K562 (cell line): ENCODE measurements at regions of chr14 and their contacts with region 1.

Region 1: DNA sequence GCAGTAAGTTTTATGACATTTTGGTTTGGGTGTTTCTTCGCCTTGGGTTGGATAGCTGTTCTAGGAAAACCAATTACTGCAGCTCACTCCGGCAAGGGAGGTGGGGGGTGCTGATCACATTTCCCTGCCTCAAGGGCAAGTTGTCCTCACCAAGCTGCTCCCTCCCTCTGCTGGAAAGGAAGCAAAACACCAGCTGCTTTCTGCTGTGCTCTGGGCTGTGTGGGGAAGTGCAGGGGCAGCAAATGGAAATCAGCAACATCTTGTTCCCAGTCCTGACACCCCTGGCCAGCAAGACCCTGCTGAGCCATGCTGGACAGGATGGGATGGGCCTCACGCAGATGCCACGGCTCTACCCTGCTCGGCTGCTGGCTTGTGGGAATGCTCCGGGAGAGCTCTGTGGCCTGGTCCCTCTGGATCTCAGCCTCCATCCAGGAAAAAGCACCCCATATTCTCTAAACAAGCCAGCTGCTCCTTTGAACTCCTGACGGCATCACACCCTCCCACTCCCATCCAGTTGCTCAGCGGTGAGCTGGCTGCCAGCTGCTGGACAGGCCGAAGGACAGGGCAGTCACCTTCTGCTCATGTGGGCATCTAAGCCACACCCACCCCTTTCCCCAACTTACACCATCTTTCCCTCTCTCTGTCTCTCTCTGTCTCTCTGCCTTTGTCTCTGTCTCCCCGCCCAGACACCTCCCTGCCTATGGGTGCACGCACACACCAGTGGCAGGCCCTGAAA is 52.4 kb upstream of the EIF5 start:
- DNase-seq: peak in 2 of 4 experiments; percentile 34 to 41
- ATAC-seq: peak; percentile 84
- H3K4me3 ChIP-seq: no peak overlapping the region
- H3K27ac ChIP-seq: no peak overlapping the region
- H3K4me1 ChIP-seq: peaks cover 0 to 13% of the 10 kb centered on the region in 2 experiments; a peak in 2 of 5 replicates
- H3K27me3 ChIP-seq: peaks cover 0 to 9% of the 10 kb centered on the region in 2 experiments; a peak in 1 of 5 replicates
- CTCF ChIP-seq: peak; percentile 24 to 53 (median 48); a peak in 4 of 6 replicates
- EP300 ChIP-seq: no peak
- POLR2A ChIP-seq: no peak
- RAD21 ChIP-seq: peak in 1 of 2 experiments; percentile 41; a peak in 2 of 4 replicates

Region 2: DNA sequence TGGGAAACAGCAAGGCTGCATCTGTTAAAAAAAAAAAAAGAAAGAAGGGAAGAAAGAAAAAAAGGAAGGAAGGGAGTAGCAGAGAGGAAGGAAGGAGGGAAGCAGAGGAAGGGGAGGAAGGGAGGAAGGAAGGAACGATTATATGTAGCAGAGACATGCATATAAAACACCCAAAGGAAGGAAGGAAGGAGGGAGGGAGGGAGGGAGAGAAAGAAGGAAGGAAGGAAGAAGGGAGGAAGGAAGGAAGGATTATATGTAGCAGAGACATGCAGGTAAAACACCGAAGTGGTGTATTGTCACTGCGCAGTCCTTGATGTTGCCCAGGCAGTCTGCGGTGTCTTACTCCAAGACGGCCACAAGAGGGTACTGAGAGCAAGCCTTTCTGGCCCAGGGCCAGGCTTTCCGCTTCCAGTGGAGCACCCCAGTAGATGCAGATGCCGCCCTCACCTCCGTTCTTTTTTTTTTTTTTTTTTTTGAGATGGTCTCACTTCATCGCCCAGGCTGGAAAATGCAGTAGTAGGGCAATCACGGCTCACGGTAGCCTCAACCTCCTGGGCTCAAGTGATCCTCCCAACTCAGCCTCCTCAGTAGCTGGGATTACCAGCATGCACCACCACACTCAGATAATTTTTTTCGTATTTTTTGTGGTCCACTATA is 203.4 kb before region 1 on chr14:
- CTCF ChIA-PET with region 1: no interaction called
- POLR2A ChIA-PET with region 1: no interaction called
- in situ Hi-C with region 1: loop called (anchors 5 kb)
- intact Hi-C with region 1: no loop called
- DNase-seq: peak; percentile 63 to 87 (median 70)
- ATAC-seq: peak; percentile 67
- H3K4me3 ChIP-seq: no peak overlapping the region
- H3K27ac ChIP-seq: no peak overlapping the region
- H3K4me1 ChIP-seq: peaks cover 3 to 37% of the 10 kb centered on the region in 2 experiments; a peak in 4 of 5 replicates
- H3K27me3 ChIP-seq: no peaks in the 10 kb centered on the region; a peak in 1 of 5 replicates
- CTCF ChIP-seq: peak; percentile 78 to 81 (median 78)
- EP300 ChIP-seq: no peak
- POLR2A ChIP-seq: no peak
- RAD21 ChIP-seq: peak; percentile 24 to 73; a peak in 3 of 4 replicates

Region 3: DNA sequence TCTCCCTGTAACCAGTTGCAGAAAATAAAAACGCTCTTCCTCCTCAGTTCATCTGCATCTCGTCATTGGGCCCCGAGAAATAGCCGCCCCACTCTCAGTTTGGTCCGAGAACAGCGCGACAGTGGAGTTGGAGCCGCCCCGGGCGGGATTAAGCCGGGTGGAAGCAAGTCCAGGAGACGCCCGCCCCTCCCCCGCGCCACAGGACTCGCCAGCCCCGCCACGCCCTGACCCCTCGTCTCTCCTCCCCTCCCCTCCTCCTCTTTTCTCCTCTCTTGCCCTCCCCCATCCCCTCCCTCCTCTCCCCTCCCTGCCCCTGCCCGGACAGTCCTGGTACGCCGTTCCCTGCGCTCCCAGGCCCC is 74.7 kb before region 1 on chr14:
- CTCF ChIA-PET with region 1: no interaction called
- POLR2A ChIA-PET with region 1: no interaction called
- in situ Hi-C with region 1: no loop called
- intact Hi-C with region 1: loop called (anchors 10 kb)
- DNase-seq: peak; percentile 63 to 78 (median 66)
- ATAC-seq: peak; percentile 69
- H3K4me3 ChIP-seq: peak overlapping the region; percentile 38
- H3K27ac ChIP-seq: peak overlapping the region; percentile 89
- H3K4me1 ChIP-seq: peaks cover 20 to 35% of the 10 kb centered on the region in 2 experiments; a peak in 4 of 5 replicates
- H3K27me3 ChIP-seq: no peaks in the 10 kb centered on the region
- CTCF ChIP-seq: no peak
- EP300 ChIP-seq: no peak
- POLR2A ChIP-seq: no peak
- RAD21 ChIP-seq: no peak

Region 4: DNA sequence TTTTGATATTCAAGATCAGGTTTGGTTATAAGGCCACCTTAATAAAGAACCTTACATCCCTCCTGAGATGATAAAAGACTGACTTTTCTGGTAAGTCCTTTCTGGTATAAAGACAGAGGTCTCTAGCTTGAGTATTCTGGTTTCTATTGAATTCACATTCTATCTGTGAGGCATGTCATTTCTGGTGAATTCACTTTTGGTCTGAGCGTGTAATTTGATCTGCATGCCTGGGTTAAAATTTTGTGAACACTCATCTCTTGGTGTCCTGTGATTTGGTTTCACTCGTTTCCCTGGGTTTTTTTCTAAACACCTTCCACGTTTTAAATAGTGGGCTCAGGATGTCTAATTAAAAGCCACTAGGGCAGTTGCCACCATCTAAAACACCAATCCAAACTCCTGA is 64.6 kb after region 1 on chr14:
- CTCF ChIA-PET with region 1: no interaction called
- POLR2A ChIA-PET with region 1: no interaction called
- in situ Hi-C with region 1: no loop called
- intact Hi-C with region 1: no loop called
- DNase-seq: no peak
- ATAC-seq: no peak
- H3K4me3 ChIP-seq: no peak overlapping the region
- H3K27ac ChIP-seq: no peak overlapping the region
- H3K4me1 ChIP-seq: peaks cover 0 to 5% of the 10 kb centered on the region in 2 experiments; a peak in 3 of 5 replicates
- H3K27me3 ChIP-seq: no peaks in the 10 kb centered on the region
- CTCF ChIP-seq: no peak
- EP300 ChIP-seq: no peak
- POLR2A ChIP-seq: no peak
- RAD21 ChIP-seq: no peak